OCI-LY7 (cell line): ENCODE measurements at regions of chrX and their contacts with region 1.

Region 1: DNA sequence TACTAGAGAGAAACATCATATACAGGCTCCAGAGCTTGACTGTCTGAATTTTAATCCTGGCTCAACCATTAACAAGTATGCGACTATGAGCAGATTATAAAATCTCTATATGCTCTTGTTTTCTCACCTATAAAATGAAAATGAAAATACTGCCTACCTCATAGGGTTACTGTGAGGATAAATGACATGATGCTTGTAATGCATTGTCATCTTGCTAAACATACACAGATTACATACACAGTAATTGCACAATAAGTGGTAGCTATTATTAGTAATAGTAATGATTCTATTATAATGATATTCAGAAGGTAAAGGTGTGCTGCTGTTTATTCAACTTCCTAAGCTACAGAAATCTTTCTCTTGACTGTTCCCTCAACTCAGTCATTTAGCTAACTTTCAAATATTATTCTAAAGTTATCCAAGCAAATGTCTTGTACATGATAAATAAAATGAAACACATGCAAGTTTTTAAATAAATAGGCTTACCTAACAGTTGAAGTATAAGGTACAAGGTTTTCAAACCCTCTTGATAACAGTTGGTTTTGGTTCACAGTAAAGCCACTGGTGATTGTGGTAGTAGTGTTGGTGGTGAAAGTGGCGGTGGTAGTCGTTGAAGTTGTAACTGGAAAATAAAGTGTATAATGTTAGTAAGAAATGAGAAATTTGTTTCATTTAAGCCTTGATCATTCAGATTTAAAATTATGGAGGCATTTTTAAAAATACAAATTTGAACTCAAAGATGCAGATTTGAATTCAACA is 38.9 kb downstream of the NUP62CL start:
- DNase-seq: no peak
- H3K4me3 ChIP-seq: no peak overlapping the region
- H3K27ac ChIP-seq: no peak overlapping the region
- H3K4me1 ChIP-seq: no peaks in the 10 kb centered on the region
- CTCF ChIP-seq: no peak

Region 2: DNA sequence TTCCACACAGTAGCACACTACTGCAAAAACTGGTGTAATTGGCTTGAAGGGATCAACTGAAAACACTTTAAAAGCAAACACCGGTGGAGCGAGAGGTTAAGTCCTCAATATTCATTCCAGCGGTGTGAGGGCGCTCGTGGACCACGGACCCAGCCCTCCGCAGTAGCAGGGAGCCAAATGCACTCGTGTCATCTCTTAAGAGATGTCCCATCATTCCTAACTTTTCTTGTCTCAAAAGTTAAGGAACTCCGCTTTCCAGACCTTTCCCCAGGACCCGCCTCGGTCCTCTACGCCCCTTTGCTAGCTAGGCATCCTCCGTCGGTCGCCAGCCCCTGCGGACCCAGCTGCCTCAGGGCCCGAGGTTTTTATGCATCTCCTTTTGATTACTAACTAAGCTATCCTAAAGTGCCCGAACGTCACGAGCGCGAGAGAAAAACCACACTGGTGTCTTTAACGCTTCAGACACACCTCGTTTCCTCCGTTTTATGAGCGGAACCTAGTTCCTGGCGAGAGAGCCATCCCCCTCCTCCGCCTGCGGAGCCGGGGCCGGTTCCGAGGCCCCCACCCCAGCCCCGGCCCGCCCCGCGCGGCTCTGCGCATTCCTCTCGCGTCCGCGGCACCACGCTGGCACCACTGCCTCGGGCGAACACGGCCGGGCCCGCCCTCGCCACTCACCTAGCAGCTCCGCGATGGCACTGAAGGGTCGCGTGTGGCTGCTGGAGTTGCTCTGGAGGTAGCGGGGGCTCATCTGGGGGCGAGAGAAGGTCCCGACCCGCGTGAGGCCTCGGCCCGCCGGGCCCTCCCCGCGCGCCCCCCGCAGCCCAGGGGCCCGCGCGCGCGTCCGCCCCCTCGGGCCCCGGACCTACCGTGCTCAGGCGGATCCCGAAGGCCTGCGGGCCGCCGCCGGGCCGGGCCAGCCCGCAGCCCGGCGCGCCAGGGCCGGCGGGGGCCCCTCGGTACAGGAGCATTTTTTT is 168.1 kb before region 1 on chrX:
- CTCF ChIA-PET with region 1: no interaction called
- POLR2A ChIA-PET with region 1: no interaction called
- intact Hi-C with region 1: no loop called
- DNase-seq: peak; percentile 67
- H3K4me3 ChIP-seq: peak overlapping the region; percentile 78
- H3K27ac ChIP-seq: peak overlapping the region; percentile 33
- H3K4me1 ChIP-seq: peaks cover 9% of the 10 kb centered on the region
- CTCF ChIP-seq: peak; percentile 75

Region 3: DNA sequence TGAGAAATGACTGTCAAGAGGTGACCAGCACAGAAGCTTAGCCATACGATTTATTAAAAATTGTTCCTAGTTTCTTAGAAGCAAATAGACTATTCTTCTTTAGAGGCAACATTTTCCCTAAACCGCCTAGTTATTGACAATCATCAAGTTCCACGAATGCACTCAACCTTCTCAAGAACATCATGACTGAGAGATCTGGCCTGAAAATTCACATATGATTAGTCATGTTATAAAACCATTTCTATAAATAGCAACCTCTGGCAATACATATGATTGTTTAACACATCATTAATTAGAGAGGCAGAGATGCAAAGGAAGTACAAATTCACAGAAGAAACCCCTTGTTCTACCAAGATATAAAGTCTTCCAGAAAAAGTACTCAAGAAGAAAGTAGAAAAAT is 32.1 kb after region 1 on chrX:
- CTCF ChIA-PET with region 1: no interaction called
- POLR2A ChIA-PET with region 1: interaction called, 12 read pairs
- intact Hi-C with region 1: no loop called
- DNase-seq: no peak
- H3K4me3 ChIP-seq: no peak overlapping the region
- H3K27ac ChIP-seq: no peak overlapping the region
- H3K4me1 ChIP-seq: no peaks in the 10 kb centered on the region
- CTCF ChIP-seq: no peak

Region 4: DNA sequence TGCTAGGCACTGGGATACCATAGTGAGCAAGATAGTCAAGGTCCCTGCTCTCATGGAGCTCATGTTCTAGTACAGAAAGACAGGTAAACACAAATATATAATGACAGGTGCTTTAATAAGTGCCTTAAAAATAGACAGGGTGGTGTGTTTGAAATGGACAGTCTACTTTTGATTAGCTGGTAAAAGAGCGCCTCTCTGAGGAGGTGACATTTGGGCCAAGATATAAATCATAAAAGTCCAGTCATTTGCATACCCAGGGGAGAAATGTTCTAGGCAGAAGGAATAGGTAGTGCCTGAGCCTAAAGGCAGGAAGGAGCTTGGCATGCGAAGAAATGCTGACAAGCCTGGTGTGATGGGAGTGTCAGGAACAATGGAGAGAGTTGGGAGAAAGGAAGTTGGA is 122.7 kb after region 1 on chrX:
- CTCF ChIA-PET with region 1: no interaction called
- POLR2A ChIA-PET with region 1: no interaction called
- intact Hi-C with region 1: no loop called
- DNase-seq: no peak
- H3K4me3 ChIP-seq: no peak overlapping the region
- H3K27ac ChIP-seq: no peak overlapping the region
- H3K4me1 ChIP-seq: no peaks in the 10 kb centered on the region
- CTCF ChIP-seq: no peak